OCI-LY7 (cell line): ENCODE measurements at regions of chr6 and their contacts with region 1.

Region 1: GRCh38 chr6:119333707-119334295 is 15.8 kb downstream of the MAN1A1 start:
- DNase-seq: peak; percentile 51
- H3K4me3 ChIP-seq: no peak overlapping the region
- H3K27ac ChIP-seq: no peak overlapping the region
- H3K4me1 ChIP-seq: peaks cover 71% of the 10 kb centered on the region
- CTCF ChIP-seq: peak; percentile 81

Region 2: GRCh38 chr6:119978274-119978889 is 644.6 kb after region 1 on chr6:
- CTCF ChIA-PET with region 1: no interaction called
- POLR2A ChIA-PET with region 1: no interaction called
- intact Hi-C with region 1: loop called (anchors 5 kb)
- DNase-seq: peak; percentile 46
- H3K4me3 ChIP-seq: no peak overlapping the region
- H3K27ac ChIP-seq: no peak overlapping the region
- H3K4me1 ChIP-seq: no peaks in the 10 kb centered on the region
- CTCF ChIP-seq: peak; percentile 83

Region 3: GRCh38 chr6:120056085-120056484 is 722.3 kb after region 1 on chr6:
- CTCF ChIA-PET with region 1: no interaction called
- POLR2A ChIA-PET with region 1: no interaction called
- intact Hi-C with region 1: loop called (anchors 5 kb)
- DNase-seq: peak; percentile 36
- H3K4me3 ChIP-seq: no peak overlapping the region
- H3K27ac ChIP-seq: no peak overlapping the region
- H3K4me1 ChIP-seq: no peaks in the 10 kb centered on the region
- CTCF ChIP-seq: peak; percentile 79